AG04449 (cell line): ENCODE measurements at regions of chr16 and their contacts with region 1.

Region 1: DNA sequence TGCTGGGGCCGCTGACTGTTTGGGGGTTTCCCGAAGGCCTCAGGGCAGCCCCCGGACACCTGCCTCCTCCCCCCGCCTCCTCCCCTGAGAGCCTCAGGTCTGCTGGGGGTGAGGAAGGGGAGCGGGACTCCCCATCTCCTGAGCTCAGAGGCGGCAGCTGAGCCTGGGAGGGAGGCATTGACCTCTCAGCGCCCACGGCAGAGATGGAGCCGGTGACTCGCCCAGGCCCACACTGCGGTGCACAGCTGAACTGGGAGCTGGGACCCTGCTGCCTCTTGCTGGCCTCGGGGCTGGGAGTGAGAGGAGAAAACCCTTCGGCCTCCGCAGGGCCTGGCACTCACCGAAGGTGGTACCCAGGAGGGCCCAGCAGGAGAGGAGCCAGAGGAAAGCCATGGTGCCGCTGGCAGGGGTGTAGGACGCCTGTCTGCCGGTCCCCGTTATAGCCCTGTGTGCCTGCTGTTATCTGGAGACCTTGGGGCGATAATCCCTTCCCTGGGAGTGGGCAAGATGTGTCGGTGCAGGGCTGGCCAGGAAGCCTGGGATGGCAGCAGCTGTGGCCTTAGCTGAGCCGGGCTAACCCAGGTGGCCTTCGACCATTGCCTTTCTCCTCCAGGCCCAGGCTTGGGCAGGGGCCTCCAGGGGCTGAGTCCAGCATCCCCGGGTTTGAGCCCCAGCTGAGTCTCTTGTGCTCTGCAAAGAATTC is at the start of gene CTRB2:
- DNase-seq: no peak
- H3K4me3 ChIP-seq: no peak within 1 kb of the TSS
- CTCF ChIP-seq: no peak

Region 2: DNA sequence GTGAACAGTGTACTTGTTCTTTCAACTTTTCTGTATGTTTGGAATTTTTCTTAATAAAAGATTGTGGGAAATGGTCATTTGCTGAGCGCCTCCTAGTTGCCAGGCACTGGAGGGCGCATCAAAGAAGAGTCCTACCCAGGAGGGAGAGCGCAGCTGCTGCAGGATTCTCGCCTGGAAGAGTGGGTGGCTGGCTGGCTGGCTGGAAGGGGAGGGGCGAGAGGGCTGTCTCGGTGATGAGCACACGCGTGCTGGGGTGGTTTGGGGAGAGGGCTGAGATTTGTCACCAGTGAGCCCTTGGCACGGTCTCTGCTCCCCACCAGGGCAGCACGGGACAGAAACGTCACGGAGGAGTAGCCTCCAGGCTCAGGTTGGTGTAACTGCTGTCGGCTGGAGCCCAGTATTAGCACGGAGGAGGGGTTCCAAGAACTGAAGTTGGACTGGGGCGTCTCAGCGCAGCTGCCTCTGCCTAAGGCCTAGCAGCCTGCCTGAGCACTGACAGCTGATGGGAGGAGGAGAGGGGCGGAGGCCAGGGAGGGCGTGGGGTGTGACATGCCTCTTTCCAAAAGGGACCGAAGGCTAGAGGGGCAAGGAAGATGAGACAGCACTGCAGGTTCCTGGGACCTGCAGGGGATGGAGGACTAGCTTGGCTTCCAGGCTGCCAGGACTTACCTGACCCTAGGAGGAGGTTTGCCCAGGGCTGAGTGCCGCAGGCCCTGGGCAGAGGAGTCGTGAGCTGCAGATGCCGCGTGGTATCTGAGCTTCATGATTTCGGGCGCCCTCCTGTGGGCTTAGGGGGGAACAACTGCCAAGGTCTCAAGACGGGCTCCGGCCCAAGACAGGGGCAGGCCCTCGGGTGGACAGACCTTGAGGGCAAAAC is 96.0 kb before region 1 on chr16:
- CTCF ChIA-PET with region 1: no interaction called
- POLR2A ChIA-PET with region 1: no interaction called
- DNase-seq: peak; percentile 55
- H3K4me3 ChIP-seq: peak overlapping the region; percentile 42
- CTCF ChIP-seq: peak; percentile 96

Region 3: DNA sequence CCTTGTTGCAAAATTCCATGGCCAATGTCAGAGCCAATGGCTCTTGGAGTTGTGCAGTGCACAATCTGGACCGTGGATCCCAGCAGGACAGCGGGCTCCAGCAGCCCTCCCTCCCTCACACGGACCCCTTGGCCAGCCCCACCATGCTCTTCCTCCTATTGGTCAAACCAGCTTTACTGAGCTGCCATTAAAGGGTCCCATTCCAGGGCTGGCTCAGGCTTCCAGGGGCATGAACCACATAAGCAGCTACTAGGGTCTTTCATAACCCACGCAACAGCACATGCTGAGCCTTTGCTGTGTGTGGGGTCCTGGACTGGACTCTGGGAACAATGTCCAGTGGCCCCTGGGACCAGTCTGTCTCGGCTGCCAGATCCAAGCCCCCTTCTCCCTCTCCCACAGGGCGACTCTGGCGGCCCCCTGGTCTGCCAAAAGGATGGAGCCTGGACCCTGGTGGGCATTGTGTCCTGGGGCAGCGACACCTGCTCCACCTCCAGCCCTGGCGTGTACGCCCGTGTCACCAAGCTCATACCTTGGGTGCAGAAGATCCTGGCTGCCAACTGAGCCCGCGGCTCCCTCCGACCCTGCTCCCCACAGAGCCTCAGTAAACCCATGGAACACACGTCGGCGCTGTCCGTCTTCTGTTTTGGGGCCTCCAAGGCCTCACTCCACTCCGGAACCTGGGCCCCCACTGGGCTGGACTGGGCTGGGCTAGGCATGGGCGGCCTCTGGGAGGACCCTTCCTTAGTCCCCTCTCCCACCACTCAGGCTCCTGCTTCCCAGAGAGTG is 17.6 kb after region 1 on chr16:
- CTCF ChIA-PET with region 1: interaction called, 74 read pairs
- POLR2A ChIA-PET with region 1: interaction called, 11 read pairs
- DNase-seq: no peak
- H3K4me3 ChIP-seq: no peak overlapping the region
- CTCF ChIP-seq: no peak